A549 (cell line): ENCODE measurements at regions of chr10 and their contacts with region 1.

Region 1: DNA sequence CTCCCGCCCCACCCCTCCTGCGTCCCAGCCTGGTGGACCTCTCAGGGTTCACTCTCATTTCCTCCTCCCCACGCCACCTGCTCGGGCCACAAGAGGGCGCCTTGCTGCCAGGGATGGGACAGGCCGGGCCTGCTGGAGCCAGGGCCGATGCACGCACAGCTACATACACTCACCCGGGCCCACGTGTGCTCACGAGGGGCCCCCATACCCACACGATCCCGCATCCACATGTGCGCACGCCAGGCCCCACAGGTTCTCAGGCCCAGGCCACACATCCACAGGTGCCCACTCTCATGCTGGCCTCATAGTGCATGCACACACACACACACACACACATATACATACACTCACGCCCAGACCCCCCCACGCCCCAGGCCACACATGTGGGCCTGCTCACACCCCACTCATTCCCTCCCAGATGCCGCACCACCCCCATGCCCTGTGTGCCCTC is 68.6 kb downstream of the LHPP start:
- DNase-seq: peak; percentile 81 to 92
- ATAC-seq: peak; percentile 93 to 98
- H3K4me3 ChIP-seq: no peak overlapping the region
- H3K27ac ChIP-seq: peak overlapping the region in 1 of 2 experiments; percentile 64; a peak in 2 of 6 replicates
- H3K4me1 ChIP-seq: peaks cover 5% of the 10 kb centered on the region; the same call in 1 of the 3 replicates
- CTCF ChIP-seq: peak; percentile 80
- EP300 ChIP-seq: no peak
- POLR2A ChIP-seq: no peak
- RAD21 ChIP-seq: peak; percentile 86 to 92

Region 2: DNA sequence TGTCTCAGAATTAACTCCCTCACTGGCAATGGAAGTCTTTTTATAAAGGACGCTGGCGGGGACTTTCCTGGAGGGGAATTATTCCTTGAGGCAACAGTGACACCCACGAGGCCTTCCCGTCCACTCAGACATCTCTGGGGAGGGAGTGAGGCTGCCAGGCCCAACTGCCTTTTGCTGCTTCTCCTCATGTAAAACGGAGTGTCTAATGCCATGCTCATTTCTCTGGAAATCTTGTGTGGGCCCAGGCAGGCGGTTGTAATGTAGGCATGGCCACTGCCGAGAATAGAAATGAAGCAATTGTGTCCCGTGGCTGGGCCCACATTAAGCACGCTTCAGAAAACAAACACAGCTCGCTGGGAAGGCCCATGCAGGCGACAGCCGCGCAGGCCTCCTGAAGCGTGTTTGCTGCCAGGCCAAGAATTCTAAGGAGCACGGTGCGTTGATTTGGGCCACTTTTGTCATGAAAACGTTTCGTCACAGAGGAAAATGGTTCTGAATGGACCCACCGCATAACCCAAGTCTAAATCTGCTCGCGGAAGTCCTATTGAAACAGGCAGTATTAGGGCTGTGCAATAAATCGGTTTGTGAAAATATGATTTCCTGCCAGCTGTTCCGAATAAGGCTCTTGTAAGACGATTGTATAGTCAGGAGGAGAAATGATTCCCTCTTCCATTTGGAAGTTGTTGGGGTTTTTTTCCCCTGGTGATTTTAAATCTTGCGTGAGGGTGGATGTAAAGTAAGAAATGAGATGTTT is 332.7 kb before region 1 on chr10:
- CTCF ChIA-PET with region 1: no interaction called
- POLR2A ChIA-PET with region 1: no interaction called
- DNase-seq: no peak
- ATAC-seq: no peak
- H3K4me3 ChIP-seq: no peak overlapping the region
- H3K27ac ChIP-seq: no peak overlapping the region
- H3K4me1 ChIP-seq: no peaks in the 10 kb centered on the region
- CTCF ChIP-seq: no peak
- EP300 ChIP-seq: no peak
- POLR2A ChIP-seq: no peak
- RAD21 ChIP-seq: no peak

Region 3: DNA sequence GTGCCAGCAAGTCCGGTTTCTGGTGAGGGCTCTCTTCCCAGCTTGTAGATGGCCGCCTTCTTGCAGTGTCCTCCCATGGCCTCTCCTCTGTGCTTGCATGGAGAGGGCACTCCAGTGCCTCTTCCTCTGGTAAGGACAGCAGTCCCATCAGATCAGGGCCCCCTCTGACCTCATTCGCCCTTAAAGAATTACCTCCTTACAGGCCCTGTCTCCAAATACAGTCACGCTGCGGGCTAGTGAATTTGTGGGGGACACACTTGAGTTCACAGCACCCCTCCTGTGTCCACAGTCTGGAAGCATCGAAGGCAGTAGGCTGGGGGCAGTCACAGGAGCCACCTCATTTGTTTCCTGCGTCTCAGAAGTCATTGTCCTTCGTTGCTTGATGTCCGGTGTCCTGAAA is 14.1 kb before region 1 on chr10:
- CTCF ChIA-PET with region 1: interaction called, 20 read pairs
- POLR2A ChIA-PET with region 1: no interaction called
- DNase-seq: no peak
- ATAC-seq: no peak; a peak in 1 of 6 replicates
- H3K4me3 ChIP-seq: no peak overlapping the region
- H3K27ac ChIP-seq: no peak overlapping the region
- H3K4me1 ChIP-seq: no peaks in the 10 kb centered on the region
- CTCF ChIP-seq: no peak
- EP300 ChIP-seq: no peak
- POLR2A ChIP-seq: no peak
- RAD21 ChIP-seq: no peak

Region 4: DNA sequence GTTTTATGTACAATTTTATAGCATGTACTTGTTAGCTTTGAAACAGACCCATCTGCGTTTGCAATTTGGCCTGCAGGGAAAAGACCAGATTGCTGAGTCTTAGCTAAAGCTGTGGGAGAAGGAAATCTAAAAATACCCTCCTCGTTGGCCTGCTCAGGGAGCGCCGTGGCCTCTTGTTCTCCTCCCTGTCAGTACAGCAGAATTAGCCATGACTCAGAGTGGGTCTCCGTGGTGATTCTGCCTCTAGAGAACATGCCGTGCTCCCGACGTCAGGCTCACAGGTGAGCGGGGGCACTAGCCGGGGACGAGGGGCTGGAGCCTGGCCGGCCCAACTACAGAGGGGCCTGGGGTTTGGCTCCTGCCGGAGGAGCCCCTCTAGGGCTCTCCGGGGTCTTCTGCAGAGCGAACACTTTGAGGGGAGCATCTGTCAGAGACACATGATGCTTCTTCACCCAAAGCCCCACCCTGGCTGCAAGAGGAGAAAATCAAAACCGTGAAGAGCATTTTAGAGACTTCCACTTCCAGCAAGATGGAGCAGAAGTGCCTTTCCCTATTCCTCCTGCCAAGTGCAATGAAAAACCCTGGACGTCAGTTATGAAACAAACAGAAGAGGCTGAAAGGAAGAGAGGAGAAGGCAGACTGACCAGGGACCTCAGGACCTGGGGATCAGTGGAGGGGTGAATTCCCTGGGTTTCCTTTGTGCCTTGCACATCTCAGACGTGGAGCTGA is 30.3 kb after region 1 on chr10:
- CTCF ChIA-PET with region 1: no interaction called
- POLR2A ChIA-PET with region 1: no interaction called
- DNase-seq: no peak
- ATAC-seq: no peak
- H3K4me3 ChIP-seq: no peak overlapping the region
- H3K27ac ChIP-seq: no peak overlapping the region
- H3K4me1 ChIP-seq: no peaks in the 10 kb centered on the region
- CTCF ChIP-seq: no peak
- EP300 ChIP-seq: no peak
- POLR2A ChIP-seq: no peak
- RAD21 ChIP-seq: no peak

Region 5: DNA sequence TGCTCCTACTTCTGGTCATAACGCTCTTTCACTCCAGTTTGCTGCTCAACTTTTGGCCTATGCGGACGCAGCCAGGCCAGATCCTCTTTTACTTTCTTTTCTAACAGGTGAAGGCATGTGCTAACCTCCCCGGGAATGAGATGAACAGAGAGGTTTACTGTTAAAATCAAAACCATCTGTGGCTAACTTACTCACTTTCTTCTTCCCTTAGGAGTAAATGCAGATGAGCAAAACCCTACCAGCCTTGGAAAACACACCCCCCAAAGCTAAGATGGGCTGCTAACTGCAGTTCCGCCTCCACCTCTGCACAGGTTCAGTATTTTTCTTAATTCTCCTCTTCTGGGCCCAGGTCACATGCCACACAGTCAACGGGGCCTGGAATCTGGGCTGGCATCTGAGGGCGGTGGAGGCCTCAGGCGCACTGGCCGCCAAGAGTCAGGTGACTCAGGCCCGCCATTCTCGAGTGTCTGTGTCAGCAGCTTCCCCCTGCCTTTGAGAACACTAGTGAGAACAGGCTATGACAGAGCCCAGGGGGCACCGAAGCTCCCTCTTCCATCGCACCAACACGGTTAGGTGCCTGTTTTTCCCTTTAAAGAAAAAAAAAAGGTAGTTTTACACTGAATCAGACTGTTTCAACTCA is 202.8 kb after region 1 on chr10:
- CTCF ChIA-PET with region 1: interaction called, 96 read pairs
- POLR2A ChIA-PET with region 1: no interaction called
- DNase-seq: no peak
- ATAC-seq: no peak
- H3K4me3 ChIP-seq: no peak overlapping the region
- H3K27ac ChIP-seq: no peak overlapping the region
- H3K4me1 ChIP-seq: peaks cover 15% of the 10 kb centered on the region
- CTCF ChIP-seq: no peak
- EP300 ChIP-seq: no peak
- POLR2A ChIP-seq: no peak
- RAD21 ChIP-seq: no peak

Region 6: DNA sequence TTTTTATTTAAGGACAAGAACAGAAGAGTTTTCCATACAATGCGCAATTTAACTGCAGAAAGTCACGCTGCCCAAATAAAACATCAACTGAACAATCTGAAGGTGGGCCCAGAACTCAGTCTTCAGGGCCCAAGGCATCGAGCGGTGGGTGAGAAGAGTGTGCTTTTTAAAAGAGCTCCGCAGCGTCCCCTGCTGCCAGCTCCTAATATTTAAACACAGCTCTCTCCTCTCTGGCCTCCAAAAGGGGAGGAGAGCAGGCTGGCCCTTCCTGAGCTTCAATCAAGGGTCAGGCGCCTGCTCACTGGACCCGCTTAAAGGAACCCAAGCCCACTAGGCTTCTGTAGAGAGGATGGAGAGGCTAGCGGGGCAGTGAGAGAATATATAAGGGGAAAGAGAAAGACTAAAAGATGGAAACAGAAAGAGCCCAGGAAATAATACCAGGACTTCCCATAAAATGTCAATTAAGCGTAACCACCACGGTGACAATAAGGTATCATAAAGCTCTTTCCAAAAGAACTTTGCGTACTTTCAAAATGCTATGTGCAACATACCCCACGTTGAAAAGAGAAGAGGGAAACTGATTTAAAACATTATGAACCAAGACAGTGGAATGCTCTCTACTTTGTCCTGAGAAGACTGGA is 211.2 kb after region 1 on chr10:
- CTCF ChIA-PET with region 1: interaction called, 96 read pairs
- POLR2A ChIA-PET with region 1: interaction called, 5 read pairs
- DNase-seq: peak; percentile 71 to 87
- ATAC-seq: peak; percentile 47 to 79; a peak in 5 of 6 replicates
- H3K4me3 ChIP-seq: no peak overlapping the region
- H3K27ac ChIP-seq: no peak overlapping the region
- H3K4me1 ChIP-seq: peaks cover 44% of the 10 kb centered on the region
- CTCF ChIP-seq: peak; percentile 78
- EP300 ChIP-seq: no peak
- POLR2A ChIP-seq: no peak
- RAD21 ChIP-seq: peak; percentile 66 to 71

Region 7: GRCh38 chr10:124827474-124827873 is 297.2 kb after region 1 on chr10:
- CTCF ChIA-PET with region 1: interaction called, 27 read pairs
- POLR2A ChIA-PET with region 1: no interaction called
- DNase-seq: peak; percentile 19 to 66
- ATAC-seq: no peak
- H3K4me3 ChIP-seq: no peak overlapping the region
- H3K27ac ChIP-seq: no peak overlapping the region
- H3K4me1 ChIP-seq: no peaks in the 10 kb centered on the region
- CTCF ChIP-seq: peak; percentile 53
- EP300 ChIP-seq: no peak
- POLR2A ChIP-seq: no peak
- RAD21 ChIP-seq: peak; percentile 39 to 41; a peak in 4 of 5 replicates